CD14-positive monocyte (primary cell): ENCODE measurements at regions of chr15 and their contacts with region 1.

Region 1: GRCh38 chr15:51536965-51537574 is 85.5 kb downstream of the DMXL2 start:
- DNase-seq: peak; percentile 11 to 39 (median 30)
- H3K4me3 ChIP-seq: no peak overlapping the region
- H3K4me3 Mint-ChIP-seq: no peak overlapping the region
- H3K27ac ChIP-seq: no peak overlapping the region
- H3K27ac Mint-ChIP-seq: peak overlapping the region in 6 of 7 donors; percentile 23 to 73 (median 40)
- H3K4me1 ChIP-seq: no peaks in the 10 kb centered on the region
- H3K4me1 Mint-ChIP-seq: no peaks in the 10 kb centered on the region
- H3K27me3 ChIP-seq: no peaks in the 10 kb centered on the region
- H3K27me3 Mint-ChIP-seq: no peaks in the 10 kb centered on the region
- CTCF ChIP-seq: peak; percentile 80

Region 2: DNA sequence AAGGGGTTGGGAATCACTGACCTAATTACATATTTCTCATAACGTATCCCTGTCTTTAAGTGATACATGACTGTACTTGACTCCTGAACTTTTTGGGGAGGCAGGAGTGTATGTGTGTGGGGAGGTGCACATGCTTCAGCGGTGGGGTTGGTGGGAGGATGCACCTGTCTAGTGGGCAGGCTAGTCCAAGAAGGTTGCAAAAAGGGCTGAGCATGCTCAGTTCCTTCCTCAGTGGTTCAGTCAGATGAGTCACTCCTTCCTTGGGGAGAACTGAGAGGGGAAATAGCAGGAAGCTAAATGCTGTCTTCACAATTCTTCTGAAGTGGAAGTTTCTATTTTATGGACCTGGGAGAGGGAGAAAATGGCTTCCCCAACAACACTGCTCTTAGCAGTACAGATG is 653.2 kb before region 1 on chr15:
- intact Hi-C with region 1: no loop called
- DNase-seq: peak; percentile 50 to 89 (median 84)
- H3K4me3 ChIP-seq: peak overlapping the region in 1 of 3 experiments; percentile 63
- H3K4me3 Mint-ChIP-seq: peak overlapping the region in 1 of 2 donors; percentile 49
- H3K27ac ChIP-seq: peak overlapping the region in 1 of 2 donors; percentile 87
- H3K27ac Mint-ChIP-seq: peak overlapping the region; percentile 78 to 98 (median 97)
- H3K4me1 ChIP-seq: peaks cover 65 to 83% of the 10 kb centered on the region in 2 donors
- H3K4me1 Mint-ChIP-seq: peaks cover 76% of the 10 kb centered on the region
- H3K27me3 ChIP-seq: no peaks in the 10 kb centered on the region
- H3K27me3 Mint-ChIP-seq: no peaks in the 10 kb centered on the region
- CTCF ChIP-seq: no peak

Region 3: GRCh38 chr15:51414257-51415044 is 122.6 kb before region 1 on chr15:
- intact Hi-C with region 1: no loop called
- DNase-seq: no peak
- H3K4me3 ChIP-seq: no peak overlapping the region
- H3K4me3 Mint-ChIP-seq: no peak overlapping the region
- H3K27ac ChIP-seq: no peak overlapping the region
- H3K27ac Mint-ChIP-seq: no peak overlapping the region
- H3K4me1 ChIP-seq: no peaks in the 10 kb centered on the region
- H3K4me1 Mint-ChIP-seq: no peaks in the 10 kb centered on the region
- H3K27me3 ChIP-seq: no peaks in the 10 kb centered on the region
- H3K27me3 Mint-ChIP-seq: peaks cover 0 to 2% (median 2%) of the 10 kb centered on the region in 3 donors
- CTCF ChIP-seq: no peak

Region 4: GRCh38 chr15:51558411-51558810 is 21.3 kb after region 1 on chr15:
- intact Hi-C with region 1: loop called in 1 of 2 experiments (anchors 2 kb)
- DNase-seq: peak; percentile 64 to 80 (median 79)
- H3K4me3 ChIP-seq: no peak overlapping the region
- H3K4me3 Mint-ChIP-seq: no peak overlapping the region
- H3K27ac ChIP-seq: peak overlapping the region in 1 of 2 donors; percentile 58
- H3K27ac Mint-ChIP-seq: peak overlapping the region; percentile 84 to 94 (median 87)
- H3K4me1 ChIP-seq: peaks cover 15 to 24% of the 10 kb centered on the region in 2 donors
- H3K4me1 Mint-ChIP-seq: peaks cover 21% of the 10 kb centered on the region
- H3K27me3 ChIP-seq: no peaks in the 10 kb centered on the region
- H3K27me3 Mint-ChIP-seq: no peaks in the 10 kb centered on the region
- CTCF ChIP-seq: no peak

Region 5: GRCh38 chr15:51771773-51772172 is 234.7 kb after region 1 on chr15:
- intact Hi-C with region 1: loop called in 1 of 2 experiments (anchors 5 kb)
- DNase-seq: no peak
- H3K4me3 ChIP-seq: no peak overlapping the region
- H3K4me3 Mint-ChIP-seq: no peak overlapping the region
- H3K27ac ChIP-seq: no peak overlapping the region
- H3K27ac Mint-ChIP-seq: no peak overlapping the region
- H3K4me1 ChIP-seq: peaks cover 10 to 12% of the 10 kb centered on the region in 2 donors
- H3K4me1 Mint-ChIP-seq: peaks cover 16% of the 10 kb centered on the region
- H3K27me3 ChIP-seq: no peaks in the 10 kb centered on the region
- H3K27me3 Mint-ChIP-seq: no peaks in the 10 kb centered on the region
- CTCF ChIP-seq: no peak

Region 6: DNA sequence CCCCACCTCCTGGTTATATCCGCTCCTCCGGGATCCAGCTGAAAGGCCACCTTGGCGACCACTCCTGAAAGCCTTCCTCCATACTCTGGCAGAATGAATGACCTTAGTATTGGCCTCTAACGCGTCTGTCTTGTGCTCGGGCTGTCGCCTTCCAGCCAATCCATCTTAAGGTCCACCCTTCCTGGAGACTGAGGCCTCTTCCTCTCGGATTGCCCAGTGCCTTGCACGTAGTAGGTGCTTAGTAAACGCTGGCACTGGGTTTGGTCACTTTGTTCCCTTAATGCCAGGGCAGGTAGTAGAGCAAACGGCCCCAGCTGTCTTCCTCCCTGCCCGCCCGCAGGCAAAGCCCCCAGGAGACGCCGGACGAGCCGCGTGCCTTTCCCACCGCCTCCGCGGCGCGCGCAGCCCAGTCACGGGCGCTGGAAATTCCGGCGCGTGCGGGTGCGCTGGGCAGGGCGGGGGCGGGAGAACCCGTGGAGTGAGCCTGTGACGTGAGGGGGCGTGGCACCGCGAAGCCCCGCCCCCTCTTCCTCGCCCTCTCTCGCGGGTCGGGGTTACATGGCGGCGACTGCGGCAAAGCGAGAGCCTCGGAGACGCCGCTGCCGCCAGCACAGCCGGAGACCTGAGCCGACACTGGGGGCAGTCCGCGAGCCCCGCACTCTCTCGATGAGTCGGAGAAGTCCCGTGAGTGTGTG is 481.8 kb after region 1 on chr15 and contains the start of gene MAPK6:
- intact Hi-C with region 1: no loop called
- DNase-seq: peak; percentile 95 to 98 (median 97)
- H3K4me3 ChIP-seq: peak within 1 kb of the TSS; percentile 53 to 98 (median 79)
- H3K4me3 Mint-ChIP-seq: peak within 1 kb of the TSS; percentile 92 to 94
- H3K27ac ChIP-seq: peak within 1 kb of the TSS; percentile 76 to 97
- H3K27ac Mint-ChIP-seq: peak within 1 kb of the TSS; percentile 96 to 100 (median 99)
- H3K4me1 ChIP-seq: peaks cover 45 to 64% of the 10 kb centered on the region in 2 donors
- H3K4me1 Mint-ChIP-seq: peaks cover 56% of the 10 kb centered on the region
- H3K27me3 ChIP-seq: no peaks in the 10 kb centered on the region
- H3K27me3 Mint-ChIP-seq: peaks cover 1 to 8% (median 4%) of the 10 kb centered on the region in 3 donors
- CTCF ChIP-seq: no peak
- polyA plus RNA-seq, gene MAPK6: 8.6 to 11.0 (median 10.2) TPM